Head of caudate nucleus (tissue), 42 donors: ENCODE measurements at regions of chr9 and their contacts with region 1.

Region 1: DNA sequence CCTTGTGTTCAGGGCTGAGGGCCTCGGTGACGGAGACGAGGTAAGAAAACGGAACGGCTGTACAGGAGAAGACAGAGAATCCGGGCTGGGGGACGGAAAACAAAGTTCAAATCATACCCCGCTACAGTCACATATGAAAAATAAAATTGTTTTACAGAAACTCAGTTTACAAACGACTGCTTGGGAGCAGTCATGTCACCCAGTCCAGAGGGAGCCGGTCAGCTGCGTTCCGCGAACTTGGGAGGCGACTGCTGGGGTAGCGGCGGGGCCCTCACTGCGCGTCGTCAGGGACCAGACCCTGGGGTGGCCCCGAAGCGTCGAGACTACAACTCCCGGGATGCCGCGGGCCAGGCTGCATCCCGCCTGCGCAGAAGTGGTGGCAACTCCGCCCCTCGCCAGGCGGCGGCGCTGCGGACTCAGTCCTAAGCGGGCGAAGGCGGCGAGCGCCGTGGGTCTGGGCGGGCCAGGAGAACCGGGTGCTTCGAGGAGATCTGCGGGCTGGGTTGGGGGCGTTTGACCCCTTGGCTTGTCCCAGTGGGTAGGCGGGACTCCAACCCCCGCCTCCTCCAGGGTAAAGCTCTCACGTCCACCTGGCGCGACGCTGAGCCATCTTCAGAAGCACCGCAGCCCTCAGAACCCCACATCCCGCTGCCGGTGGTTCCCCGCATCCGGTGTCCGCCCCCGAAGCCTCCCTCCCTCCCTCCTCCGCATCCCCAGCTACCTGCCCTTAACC is 4.0 kb downstream of the SIT1 start:
- DNase-seq: peak; percentile 77 to 97 (median 92)

Region 2: GRCh38 chr9:35603987-35604577 is 42.6 kb before region 1 on chr9:
- intact Hi-C with region 1: loop called (anchors 2 kb)
- DNase-seq: peak; percentile 97 to 100 (median 99)